A549 (cell line): ENCODE measurements at regions of chr5 and their contacts with region 1.

Region 1: DNA sequence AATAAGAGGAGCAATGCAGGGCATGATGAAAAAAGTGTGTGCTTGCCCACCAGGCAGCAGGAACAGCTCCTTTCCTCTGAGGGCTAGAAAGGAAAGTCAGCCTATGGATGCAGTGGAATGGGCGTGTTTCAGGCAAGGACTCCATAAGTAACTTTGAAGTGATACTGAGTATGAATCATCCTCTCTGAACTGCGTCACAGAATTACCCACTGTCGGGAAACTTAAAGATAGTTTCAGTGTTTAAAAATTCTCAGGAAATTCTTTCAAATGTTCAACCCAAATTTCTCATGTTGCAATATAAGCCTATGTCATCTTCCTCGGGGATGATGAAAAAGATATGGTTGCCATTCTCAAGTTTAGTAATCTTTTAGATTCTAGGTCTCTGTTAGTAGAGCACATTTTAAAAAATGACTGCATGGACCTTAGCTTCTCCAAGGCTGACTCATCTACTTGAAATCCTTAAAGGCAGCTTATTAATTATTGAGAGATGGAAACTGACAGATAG is 27.7 kb downstream of the PTCD2 start:
- DNase-seq: peak; percentile 83 to 86
- ATAC-seq: peak; percentile 98 to 99
- H3K4me3 ChIP-seq: no peak overlapping the region
- H3K27ac ChIP-seq: peak overlapping the region; percentile 85 to 92
- H3K4me1 ChIP-seq: peaks cover 44% of the 10 kb centered on the region
- CTCF ChIP-seq: no peak
- EP300 ChIP-seq: peak; percentile 91 to 97
- POLR2A ChIP-seq: no peak
- RAD21 ChIP-seq: peak in 1 of 2 experiments; percentile 8; a peak in 1 of 5 replicates

Region 2: GRCh38 chr5:72074251-72074650 is 273.6 kb before region 1 on chr5:
- CTCF ChIA-PET with region 1: no interaction called
- POLR2A ChIA-PET with region 1: no interaction called
- DNase-seq: no peak
- ATAC-seq: no peak
- H3K4me3 ChIP-seq: no peak overlapping the region
- H3K27ac ChIP-seq: no peak overlapping the region
- H3K4me1 ChIP-seq: peaks cover 24% of the 10 kb centered on the region
- CTCF ChIP-seq: no peak
- EP300 ChIP-seq: no peak
- POLR2A ChIP-seq: no peak
- RAD21 ChIP-seq: no peak

Region 3: DNA sequence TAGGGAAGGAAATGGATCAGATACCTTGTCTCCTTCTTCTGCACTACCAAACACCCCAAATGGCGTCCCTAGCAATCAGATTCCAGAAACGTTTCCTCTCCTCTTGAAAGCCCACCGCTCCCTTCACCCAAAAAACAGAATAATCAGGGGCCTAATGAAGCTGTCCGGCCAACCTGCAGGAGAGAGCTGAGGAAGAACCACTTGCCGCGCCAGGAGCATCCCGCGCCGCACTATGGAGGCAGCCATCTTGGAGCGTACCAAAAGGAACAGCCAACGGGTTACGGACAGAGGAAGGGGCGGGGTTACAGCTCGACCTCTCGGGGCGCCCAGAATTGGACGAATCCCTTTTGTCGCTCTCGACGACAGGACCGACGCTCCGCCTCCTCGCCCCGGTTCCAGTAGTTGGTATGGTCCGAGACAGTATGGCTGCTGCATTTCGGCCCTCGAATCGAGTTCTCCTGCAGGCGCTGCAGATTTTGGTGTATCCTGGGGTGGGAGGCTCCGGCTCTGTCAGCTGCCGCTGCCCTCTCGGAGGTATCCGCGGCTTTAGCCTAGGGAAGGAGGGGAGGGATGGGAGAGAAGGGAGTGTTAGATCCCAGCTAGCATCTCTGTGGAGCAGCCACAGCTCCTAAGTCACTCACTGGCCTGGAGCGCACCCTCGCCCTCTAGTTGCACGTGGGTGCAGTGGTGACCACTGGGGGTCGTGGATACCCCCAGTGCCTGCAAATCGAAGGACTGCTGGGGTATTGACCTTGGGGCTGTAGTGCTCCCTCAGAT is 27.7 kb before region 1 on chr5 and contains the starts of genes MRPS27 and PTCD2:
- CTCF ChIA-PET with region 1: interaction called, 3 read pairs
- POLR2A ChIA-PET with region 1: interaction called, 12 read pairs
- DNase-seq: peak; percentile 98 to 99
- ATAC-seq: peak; percentile 99
- H3K4me3 ChIP-seq: peak within 1 kb of the TSS; percentile 82
- H3K27ac ChIP-seq: peak within 1 kb of the TSS; percentile 89 to 94
- H3K4me1 ChIP-seq: peaks cover 37% of the 10 kb centered on the region
- CTCF ChIP-seq: peak; percentile 36; the same call in 1 of the 3 replicates
- EP300 ChIP-seq: no peak
- POLR2A ChIP-seq: peak; percentile 85
- RAD21 ChIP-seq: peak in 1 of 2 experiments; percentile 26; a peak in 1 of 5 replicates
- polyA plus RNA-seq, gene MRPS27: 141 and 160 TPM in 2 replicates
- polyA plus RNA-seq, gene PTCD2: 26.5 and 31.1 TPM in 2 replicates

Region 4: DNA sequence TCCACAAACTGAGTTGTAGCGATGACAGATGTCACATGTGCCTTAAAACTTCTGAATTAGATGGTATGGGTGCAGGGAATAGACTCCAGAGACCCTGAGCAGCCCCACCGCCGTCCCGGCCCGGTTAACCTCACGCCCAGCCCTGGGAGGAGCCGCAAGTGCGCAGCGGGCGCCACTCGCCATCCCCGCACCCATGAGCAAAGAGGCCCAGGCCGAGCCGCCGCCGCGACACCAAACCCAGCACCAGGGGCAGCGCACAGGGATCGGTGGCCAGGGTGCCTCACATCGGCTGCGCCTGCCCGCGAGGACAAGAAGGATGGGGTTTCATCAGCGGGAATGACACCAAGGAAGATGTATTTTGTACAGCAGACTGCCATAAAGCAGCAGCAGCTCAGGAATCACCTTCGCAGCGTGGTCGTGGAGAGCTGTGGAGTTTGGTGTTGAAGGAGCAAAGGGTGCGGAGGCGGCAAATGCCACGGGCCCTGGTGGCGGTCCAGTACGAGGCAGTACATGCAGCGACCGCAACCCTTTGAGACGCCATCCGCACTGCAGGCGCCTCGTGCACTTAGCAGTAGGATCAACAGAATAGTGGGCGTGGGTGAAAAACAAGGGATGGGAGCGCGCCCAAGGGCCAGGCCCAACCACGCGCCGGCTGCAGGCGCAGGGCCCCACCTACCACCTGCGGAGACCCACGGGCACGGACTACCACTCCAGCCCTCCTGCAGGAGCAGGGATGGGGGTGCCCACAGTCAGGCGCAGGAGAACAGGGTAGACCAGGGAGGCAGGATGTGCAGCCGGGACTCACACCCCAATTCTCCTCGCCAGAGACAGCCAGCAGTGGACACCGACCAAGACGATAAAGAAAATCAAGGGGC is 69.7 kb after region 1 on chr5:
- CTCF ChIA-PET with region 1: no interaction called
- POLR2A ChIA-PET with region 1: no interaction called
- DNase-seq: no peak
- ATAC-seq: no peak
- H3K4me3 ChIP-seq: no peak overlapping the region
- H3K27ac ChIP-seq: no peak overlapping the region
- H3K4me1 ChIP-seq: peaks cover 2% of the 10 kb centered on the region; the same call in 2 of the 3 replicates
- CTCF ChIP-seq: no peak
- EP300 ChIP-seq: no peak
- POLR2A ChIP-seq: no peak
- RAD21 ChIP-seq: no peak

Region 5: GRCh38 chr5:72478684-72479083 is 130.8 kb after region 1 on chr5:
- CTCF ChIA-PET with region 1: no interaction called
- POLR2A ChIA-PET with region 1: no interaction called
- DNase-seq: no peak
- ATAC-seq: no peak
- H3K4me3 ChIP-seq: no peak overlapping the region
- H3K27ac ChIP-seq: peak overlapping the region in 1 of 2 experiments; percentile 16; a peak in 1 of 6 replicates
- H3K4me1 ChIP-seq: no peaks in the 10 kb centered on the region
- CTCF ChIP-seq: no peak
- EP300 ChIP-seq: no peak
- POLR2A ChIP-seq: no peak
- RAD21 ChIP-seq: no peak

Region 6: DNA sequence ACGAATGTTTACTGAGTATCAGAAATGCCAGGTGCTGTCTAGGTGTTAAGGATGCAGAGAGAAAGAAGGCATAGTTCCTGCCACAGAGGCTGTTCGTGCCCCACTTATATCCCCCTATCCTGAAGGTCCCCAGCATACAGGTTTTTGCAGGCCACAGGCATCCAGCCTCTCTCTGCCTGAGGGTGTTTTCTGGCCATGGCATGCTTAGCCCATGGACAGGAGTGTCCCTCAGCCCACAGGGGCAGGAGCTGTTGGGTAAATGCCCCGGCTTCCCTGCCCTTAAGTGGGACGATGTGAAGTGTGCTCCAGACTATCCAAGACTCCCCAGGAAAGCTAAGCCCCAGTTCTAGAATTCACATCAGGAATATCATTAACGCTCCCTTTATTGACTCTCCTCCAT is 246.4 kb after region 1 on chr5:
- CTCF ChIA-PET with region 1: no interaction called
- POLR2A ChIA-PET with region 1: no interaction called
- DNase-seq: no peak
- ATAC-seq: no peak
- H3K4me3 ChIP-seq: no peak overlapping the region
- H3K27ac ChIP-seq: no peak overlapping the region
- H3K4me1 ChIP-seq: peaks cover 12% of the 10 kb centered on the region
- CTCF ChIP-seq: no peak
- EP300 ChIP-seq: no peak
- POLR2A ChIP-seq: no peak
- RAD21 ChIP-seq: no peak